PC-9 (cell line): ENCODE measurements at regions of chr4 and their contacts with region 1.

Region 1: DNA sequence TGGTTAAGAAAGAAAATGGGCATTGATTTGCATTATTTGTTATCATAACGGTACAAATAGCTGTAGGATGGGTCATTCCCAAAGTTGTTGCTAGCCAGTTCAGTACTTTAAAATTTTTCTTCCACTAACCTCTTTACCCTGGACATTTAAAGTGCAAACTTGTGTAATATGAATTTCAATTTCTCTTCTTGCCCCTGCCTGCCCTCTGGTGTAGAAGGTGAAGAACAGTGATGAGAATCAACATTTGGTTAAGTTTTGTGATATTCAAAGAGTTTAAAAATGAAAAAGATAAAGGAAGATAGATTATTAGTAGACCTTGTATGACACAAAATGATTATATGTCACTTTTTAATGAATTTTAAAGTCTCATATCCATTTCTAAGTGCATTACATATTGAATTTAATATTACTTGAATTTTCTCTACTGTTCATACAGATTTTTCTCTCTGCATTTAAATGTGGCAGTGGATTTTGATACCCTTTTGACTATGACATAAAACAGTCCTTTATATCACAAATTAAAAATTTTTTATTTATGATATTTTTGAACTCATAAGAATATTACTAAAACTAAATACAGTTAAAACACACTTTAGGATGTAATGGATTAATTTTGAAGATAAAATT is 337.7 kb downstream of the BMPR1B start:
- DNase-seq: peak in 1 of 2 experiments; percentile 9
- H3K4me3 ChIP-seq: no peak overlapping the region
- H3K27ac ChIP-seq: no peak overlapping the region
- H3K4me1 ChIP-seq: no peaks in the 10 kb centered on the region
- H3K27me3 ChIP-seq: no peaks in the 10 kb centered on the region
- CTCF ChIP-seq: peak; percentile 70

Region 2: DNA sequence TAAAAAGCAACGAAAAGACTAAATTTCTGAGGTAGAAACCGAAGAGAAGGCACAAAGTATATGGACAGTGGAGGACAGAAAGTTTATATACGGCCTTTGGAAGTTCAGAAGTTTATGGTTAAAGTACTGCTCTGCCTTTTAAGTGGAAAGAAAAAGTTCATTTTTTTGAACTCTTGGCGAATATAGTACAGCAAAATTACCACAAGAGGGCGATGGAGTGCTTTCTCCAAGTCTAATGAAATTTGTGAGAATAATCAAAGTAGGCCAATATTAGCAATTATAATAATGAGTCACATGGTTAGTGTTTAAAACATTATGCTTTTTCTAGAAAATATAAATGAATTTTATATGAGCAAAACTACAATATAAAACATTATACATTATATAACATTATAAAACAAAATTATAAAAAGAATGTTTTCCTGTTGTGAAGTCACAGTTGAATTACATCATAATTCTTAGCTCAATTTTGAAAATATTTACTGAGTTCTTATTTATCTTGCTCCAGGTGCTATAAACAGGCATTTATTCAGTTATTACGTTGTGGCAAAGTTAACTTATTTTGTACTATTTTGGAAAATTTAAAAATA is 473.9 kb before region 1 on chr4:
- CTCF ChIA-PET with region 1: no interaction called
- POLR2A ChIA-PET with region 1: no interaction called
- intact Hi-C with region 1: loop called (anchors 1 kb)
- DNase-seq: peak in 1 of 2 experiments; percentile 40
- H3K4me3 ChIP-seq: no peak overlapping the region
- H3K27ac ChIP-seq: no peak overlapping the region
- H3K4me1 ChIP-seq: no peaks in the 10 kb centered on the region
- H3K27me3 ChIP-seq: no peaks in the 10 kb centered on the region
- CTCF ChIP-seq: peak; percentile 76

Region 3: DNA sequence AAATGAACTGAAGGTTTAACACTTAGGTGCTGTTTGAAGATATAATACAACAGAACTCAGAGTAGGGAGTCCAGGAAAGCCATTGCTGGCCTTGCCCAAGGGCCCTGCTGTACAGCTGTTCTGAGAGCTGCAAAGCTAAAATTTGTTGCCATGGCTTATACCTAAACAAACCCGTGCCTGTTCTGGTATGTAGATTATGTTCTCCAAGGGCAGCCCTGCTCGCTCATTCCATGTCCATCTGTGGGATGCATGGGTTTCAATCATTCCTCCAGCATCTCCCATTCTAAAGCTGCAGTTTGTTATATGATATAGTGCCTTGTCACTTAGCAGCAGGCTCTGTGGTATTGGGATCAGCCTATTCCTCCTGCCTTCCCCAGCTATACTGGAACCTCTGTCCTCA is 418.5 kb before region 1 on chr4:
- CTCF ChIA-PET with region 1: no interaction called
- POLR2A ChIA-PET with region 1: no interaction called
- intact Hi-C with region 1: loop called (anchors 5 kb)
- DNase-seq: no peak
- H3K4me3 ChIP-seq: no peak overlapping the region
- H3K27ac ChIP-seq: no peak overlapping the region
- H3K4me1 ChIP-seq: no peaks in the 10 kb centered on the region
- H3K27me3 ChIP-seq: no peaks in the 10 kb centered on the region
- CTCF ChIP-seq: no peak

Region 4: DNA sequence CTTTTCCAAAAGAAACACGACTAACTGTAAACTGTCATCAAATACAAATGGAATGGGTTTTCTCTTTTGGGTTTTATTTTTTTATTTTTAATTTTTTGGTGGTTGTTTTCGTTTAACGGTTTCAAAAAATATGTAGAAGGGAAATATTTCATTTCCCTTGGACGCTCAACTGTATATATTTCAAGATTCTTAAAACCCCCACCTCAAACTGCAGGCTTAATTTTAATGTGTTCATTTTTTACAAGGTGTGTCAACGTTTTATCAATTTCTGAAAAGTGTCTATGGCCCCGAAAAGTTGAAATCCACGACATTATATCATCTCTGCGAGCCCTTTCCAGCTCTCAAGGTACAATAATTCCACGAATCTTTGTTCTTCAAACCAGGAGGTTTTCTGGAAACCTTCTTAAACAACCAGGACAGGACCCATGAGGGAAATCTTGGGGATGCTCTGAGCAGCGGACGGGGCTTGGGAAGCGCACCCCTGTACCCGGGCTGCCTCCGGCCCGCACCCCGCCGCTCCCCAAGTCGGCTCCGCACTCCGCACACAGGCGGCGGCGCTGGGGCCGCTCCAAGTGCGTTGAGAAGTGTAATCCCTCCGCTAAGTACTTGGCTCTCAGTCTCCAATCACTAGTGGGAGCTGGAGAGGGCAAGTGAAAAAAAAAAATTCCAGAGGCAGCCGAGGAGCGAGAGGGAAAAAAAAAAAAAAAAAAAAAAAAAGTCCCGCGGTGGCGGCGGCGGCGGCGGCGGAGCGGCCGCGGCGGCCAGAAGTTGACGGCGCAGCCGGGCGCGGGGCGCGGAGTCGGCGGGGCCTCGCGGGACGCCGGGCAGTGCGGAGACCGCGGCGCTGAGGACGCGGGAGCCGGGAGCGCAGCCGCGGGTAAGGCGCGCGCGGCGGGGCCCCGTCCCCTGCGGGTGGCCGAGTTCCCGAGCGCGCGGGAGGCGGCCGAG is 338.0 kb before region 1 on chr4 and contains the start of gene BMPR1B:
- CTCF ChIA-PET with region 1: no interaction called
- POLR2A ChIA-PET with region 1: no interaction called
- intact Hi-C with region 1: loop called (anchors 5 kb)
- DNase-seq: peak in 1 of 2 experiments; percentile 34
- H3K4me3 ChIP-seq: peak within 1 kb of the TSS; percentile 57
- H3K27ac ChIP-seq: no peak within 1 kb of the TSS
- H3K4me1 ChIP-seq: 0 out of 2 replicates have a peak, but pooled peaks cover 4% of the 10 kb centered on the region
- H3K27me3 ChIP-seq: peaks cover 11% of the 10 kb centered on the region
- CTCF ChIP-seq: no peak; the same call in 1 of the 2 replicates
- total RNA-seq, gene BMPR1B: 1.1 and 3.2 TPM in 2 replicates

Region 5: GRCh38 chr4:94913316-94913715 is 182.1 kb before region 1 on chr4:
- CTCF ChIA-PET with region 1: interaction called, 18 read pairs
- POLR2A ChIA-PET with region 1: no interaction called
- intact Hi-C with region 1: no loop called
- DNase-seq: no peak
- H3K4me3 ChIP-seq: no peak overlapping the region
- H3K27ac ChIP-seq: no peak overlapping the region
- H3K4me1 ChIP-seq: no peaks in the 10 kb centered on the region
- H3K27me3 ChIP-seq: no peaks in the 10 kb centered on the region
- CTCF ChIP-seq: no peak

Region 6: DNA sequence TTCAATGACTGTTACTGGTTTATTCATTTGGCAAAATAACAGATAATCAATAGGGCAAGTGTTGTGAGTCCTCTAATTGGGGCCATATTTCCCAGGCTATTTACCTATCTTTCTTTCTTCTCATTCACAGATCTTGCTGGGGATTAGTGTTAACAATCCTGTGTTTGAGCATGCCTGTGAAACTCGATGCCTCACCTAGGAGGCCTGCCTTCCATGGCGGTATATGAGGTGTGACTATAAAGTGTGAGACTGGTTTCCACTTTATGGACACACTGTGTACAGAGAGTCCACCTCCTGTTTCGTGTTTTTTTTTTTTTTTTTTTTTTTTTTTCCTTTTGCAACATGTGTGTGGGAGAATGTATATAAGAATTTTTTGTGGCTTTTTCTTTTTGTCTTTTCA is 138.4 kb before region 1 on chr4:
- CTCF ChIA-PET with region 1: no interaction called
- POLR2A ChIA-PET with region 1: no interaction called
- intact Hi-C with region 1: no loop called
- DNase-seq: no peak
- H3K4me3 ChIP-seq: no peak overlapping the region
- H3K27ac ChIP-seq: no peak overlapping the region
- H3K4me1 ChIP-seq: no peaks in the 10 kb centered on the region
- H3K27me3 ChIP-seq: no peaks in the 10 kb centered on the region
- CTCF ChIP-seq: no peak

Region 7: GRCh38 chr4:96262057-96262456 is 1166.6 kb after region 1 on chr4:
- CTCF ChIA-PET with region 1: no interaction called
- POLR2A ChIA-PET with region 1: no interaction called
- intact Hi-C with region 1: no loop called
- DNase-seq: no peak
- H3K4me3 ChIP-seq: no peak overlapping the region
- H3K27ac ChIP-seq: no peak overlapping the region
- H3K4me1 ChIP-seq: no peaks in the 10 kb centered on the region
- H3K27me3 ChIP-seq: no peaks in the 10 kb centered on the region
- CTCF ChIP-seq: no peak